Activated CD4-positive, alpha-beta memory T cell treated with anti-CD3 and anti-CD28 coated beads for 36 hours (primary cell): ENCODE measurements at regions of chr12 and their contacts with region 1.

Region 1: GRCh38 chr12:118404876-118405521 is 28.6 kb downstream of the SUDS3 start:
- DNase-seq: peak; percentile 63
- H3K4me3 Mint-ChIP-seq: no peak overlapping the region
- H3K27ac Mint-ChIP-seq: no peak overlapping the region
- H3K4me1 Mint-ChIP-seq: peaks cover 1% of the 10 kb centered on the region
- H3K27me3 Mint-ChIP-seq: no peaks in the 10 kb centered on the region

Region 2: DNA sequence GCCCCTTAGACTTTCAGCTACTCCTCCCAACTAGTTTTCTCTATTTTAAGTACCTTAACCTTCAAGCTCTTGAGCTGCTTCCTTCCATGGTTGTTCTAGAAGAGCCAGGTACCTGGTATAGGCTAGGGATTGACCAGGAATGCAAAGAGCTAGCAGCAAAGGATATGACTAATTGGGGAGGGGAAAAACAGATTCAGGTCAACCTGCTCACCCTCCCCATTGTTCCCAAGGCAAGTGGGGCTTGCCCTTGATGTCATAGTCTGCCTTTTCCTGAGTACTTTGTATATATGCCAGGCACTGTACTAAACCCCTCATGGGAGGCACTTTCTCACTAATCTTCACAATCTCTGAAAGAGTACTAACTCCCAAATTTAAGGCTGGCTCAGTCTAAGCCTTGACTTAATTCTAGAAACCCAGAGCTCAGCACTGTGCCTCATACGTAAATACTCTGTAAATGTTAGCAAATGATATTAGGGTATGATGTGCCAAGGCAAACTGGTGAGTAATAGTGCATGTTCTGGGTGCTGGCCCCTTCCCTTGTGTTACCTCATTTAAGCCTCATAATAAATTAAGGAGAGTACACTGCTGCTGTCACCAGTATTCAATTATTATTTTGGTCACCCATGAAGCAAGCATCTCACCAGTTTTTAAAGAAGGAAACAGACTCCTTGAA is 13.5 kb after region 1 on chr12:
- CTCF ChIA-PET with region 1: interaction called, 14 read pairs
- POLR2A ChIA-PET with region 1: no interaction called
- intact Hi-C with region 1: no loop called
- DNase-seq: no peak
- H3K4me3 Mint-ChIP-seq: no peak overlapping the region
- H3K27ac Mint-ChIP-seq: no peak overlapping the region
- H3K4me1 Mint-ChIP-seq: no peaks in the 10 kb centered on the region
- H3K27me3 Mint-ChIP-seq: no peaks in the 10 kb centered on the region

Region 3: GRCh38 chr12:118480235-118480634 is 75.2 kb after region 1 on chr12:
- CTCF ChIA-PET with region 1: no interaction called
- POLR2A ChIA-PET with region 1: no interaction called
- intact Hi-C with region 1: no loop called
- DNase-seq: no peak
- H3K4me3 Mint-ChIP-seq: no peak overlapping the region
- H3K27ac Mint-ChIP-seq: no peak overlapping the region
- H3K4me1 Mint-ChIP-seq: no peaks in the 10 kb centered on the region
- H3K27me3 Mint-ChIP-seq: no peaks in the 10 kb centered on the region

Region 4: GRCh38 chr12:118850244-118850825 is 445.3 kb after region 1 on chr12:
- CTCF ChIA-PET with region 1: no interaction called
- POLR2A ChIA-PET with region 1: no interaction called
- intact Hi-C with region 1: loop called (anchors 5 kb)
- DNase-seq: peak; percentile 32
- H3K4me3 Mint-ChIP-seq: no peak overlapping the region
- H3K27ac Mint-ChIP-seq: no peak overlapping the region
- H3K4me1 Mint-ChIP-seq: no peaks in the 10 kb centered on the region
- H3K27me3 Mint-ChIP-seq: no peaks in the 10 kb centered on the region

Region 5: GRCh38 chr12:119544765-119545625 is 1140.0 kb after region 1 on chr12:
- CTCF ChIA-PET with region 1: interaction called, 13 read pairs
- POLR2A ChIA-PET with region 1: no interaction called
- intact Hi-C with region 1: no loop called
- DNase-seq: peak; percentile 59
- H3K4me3 Mint-ChIP-seq: no peak overlapping the region
- H3K27ac Mint-ChIP-seq: no peak overlapping the region
- H3K4me1 Mint-ChIP-seq: no peaks in the 10 kb centered on the region
- H3K27me3 Mint-ChIP-seq: peaks cover 22% of the 10 kb centered on the region